CD4-positive, alpha-beta T cell (primary cell): ENCODE measurements at regions of chr20 and their contacts with region 1.

Region 1: GRCh38 chr20:38805502-38805957 is at the start of gene PPP1R16B:
- DNase-seq: peak; percentile 56 to 88 (median 73)
- ATAC-seq: peak; percentile 59
- H3K4me3 ChIP-seq: peak within 1 kb of the TSS; percentile 98
- H3K4me3 Mint-ChIP-seq: peak within 1 kb of the TSS; percentile 89
- H3K27ac ChIP-seq: peak within 1 kb of the TSS; percentile 96 to 100
- H3K27ac Mint-ChIP-seq: peak within 1 kb of the TSS; percentile 97
- H3K4me1 ChIP-seq: peaks cover 57% of the 10 kb centered on the region
- H3K4me1 Mint-ChIP-seq: peaks cover 55% of the 10 kb centered on the region
- H3K27me3 ChIP-seq: no peaks in the 10 kb centered on the region
- H3K27me3 Mint-ChIP-seq: no peaks in the 10 kb centered on the region
- CTCF ChIP-seq: no peak
- total RNA-seq, gene PPP1R16B: 87.6 to 91.1 TPM

Region 2: DNA sequence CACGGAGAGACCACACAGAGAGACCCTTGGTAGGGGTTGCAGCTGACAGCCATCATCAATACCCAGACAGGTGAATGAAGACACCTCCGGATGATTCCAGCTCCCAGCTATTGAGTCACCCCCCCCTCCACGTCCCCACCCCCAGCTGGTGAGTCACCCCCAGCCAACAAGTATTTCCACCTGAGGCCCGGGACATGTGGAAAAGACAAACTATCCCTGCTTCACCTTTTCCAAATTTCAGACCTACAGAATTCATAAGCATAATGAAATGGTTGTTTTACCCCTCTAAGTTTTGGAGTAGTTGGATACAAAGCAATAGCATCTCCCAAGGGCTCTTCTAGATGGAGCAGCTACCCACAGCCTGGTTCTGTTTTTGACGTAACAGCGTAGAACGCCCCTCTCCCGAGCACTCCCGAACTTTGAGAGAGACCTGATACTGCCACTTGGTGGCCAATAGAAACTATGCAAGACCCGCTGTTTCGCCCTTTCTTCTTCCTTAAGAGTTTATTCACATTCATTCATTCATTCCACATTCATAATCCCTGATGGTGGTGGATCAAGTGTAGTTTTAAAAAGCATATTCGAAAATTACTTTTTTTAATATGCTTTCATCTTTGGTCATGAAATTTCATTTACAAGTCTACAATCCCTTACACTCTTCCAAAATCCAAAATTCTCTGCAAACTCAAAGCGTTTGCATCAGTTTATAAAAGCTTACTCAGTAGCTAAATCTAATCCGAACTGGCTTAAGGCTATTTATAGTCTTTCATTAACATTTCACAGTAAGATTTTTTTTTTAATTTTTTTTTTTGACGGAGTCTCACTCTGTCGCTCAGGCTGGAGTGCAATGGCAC is 15.1 kb before region 1 on chr20:
- CTCF ChIA-PET with region 1: no interaction called
- POLR2A ChIA-PET with region 1: interaction called, 15 read pairs
- intact Hi-C with region 1: loop called (anchors 1 kb)
- DNase-seq: peak in 9 of 14 experiments; percentile 17 to 79 (median 51)
- ATAC-seq: peak; percentile 96
- H3K4me3 ChIP-seq: no peak overlapping the region
- H3K4me3 Mint-ChIP-seq: no peak overlapping the region
- H3K27ac ChIP-seq: no peak overlapping the region
- H3K27ac Mint-ChIP-seq: no peak overlapping the region
- H3K4me1 ChIP-seq: peaks cover 10% of the 10 kb centered on the region
- H3K4me1 Mint-ChIP-seq: peaks cover 13% of the 10 kb centered on the region
- H3K27me3 ChIP-seq: no peaks in the 10 kb centered on the region
- H3K27me3 Mint-ChIP-seq: no peaks in the 10 kb centered on the region
- CTCF ChIP-seq: peak; percentile 85

Region 3: GRCh38 chr20:38833857-38834164 is 28.3 kb after region 1 on chr20:
- CTCF ChIA-PET with region 1: no interaction called
- POLR2A ChIA-PET with region 1: interaction called, 10 read pairs
- intact Hi-C with region 1: loop called in 1 of 2 experiments (anchors 2 kb)
- DNase-seq: peak in 8 of 14 experiments; percentile 11 to 79 (median 35)
- ATAC-seq: peak; percentile 68
- H3K4me3 ChIP-seq: no peak overlapping the region
- H3K4me3 Mint-ChIP-seq: peak overlapping the region; percentile 16
- H3K27ac ChIP-seq: no peak overlapping the region
- H3K27ac Mint-ChIP-seq: peak overlapping the region; percentile 55
- H3K4me1 ChIP-seq: peaks cover 56% of the 10 kb centered on the region
- H3K4me1 Mint-ChIP-seq: peaks cover 69% of the 10 kb centered on the region
- H3K27me3 ChIP-seq: no peaks in the 10 kb centered on the region
- H3K27me3 Mint-ChIP-seq: no peaks in the 10 kb centered on the region
- CTCF ChIP-seq: no peak

Region 4: GRCh38 chr20:38875175-38875993 is 69.9 kb after region 1 on chr20:
- CTCF ChIA-PET with region 1: interaction called, 8 read pairs
- POLR2A ChIA-PET with region 1: interaction called, 107 read pairs
- intact Hi-C with region 1: loop called (anchors 1 to 5 kb)
- DNase-seq: peak; percentile 45 to 89 (median 62)
- ATAC-seq: peak; percentile 51
- H3K4me3 ChIP-seq: peak overlapping the region; percentile 40
- H3K4me3 Mint-ChIP-seq: peak overlapping the region; percentile 84
- H3K27ac ChIP-seq: peak overlapping the region; percentile 76 to 89
- H3K27ac Mint-ChIP-seq: peak overlapping the region; percentile 89
- H3K4me1 ChIP-seq: peaks cover 70% of the 10 kb centered on the region
- H3K4me1 Mint-ChIP-seq: peaks cover 98% of the 10 kb centered on the region
- H3K27me3 ChIP-seq: no peaks in the 10 kb centered on the region
- H3K27me3 Mint-ChIP-seq: no peaks in the 10 kb centered on the region
- CTCF ChIP-seq: no peak

Region 5: GRCh38 chr20:38962044-38962927 is 156.8 kb after region 1 on chr20 and contains the start of gene DHX35:
- CTCF ChIA-PET with region 1: no interaction called
- POLR2A ChIA-PET with region 1: interaction called, 19 read pairs
- intact Hi-C with region 1: loop called in 1 of 2 experiments (anchors 5 kb)
- DNase-seq: peak; percentile 96 to 100 (median 98)
- ATAC-seq: peak; percentile 98
- H3K4me3 ChIP-seq: peak within 1 kb of the TSS; percentile 80
- H3K4me3 Mint-ChIP-seq: peak within 1 kb of the TSS; percentile 97
- H3K27ac ChIP-seq: peak within 1 kb of the TSS; percentile 73 to 77
- H3K27ac Mint-ChIP-seq: peak within 1 kb of the TSS; percentile 88
- H3K4me1 ChIP-seq: peaks cover 16% of the 10 kb centered on the region
- H3K4me1 Mint-ChIP-seq: peaks cover 33% of the 10 kb centered on the region
- H3K27me3 ChIP-seq: no peaks in the 10 kb centered on the region
- H3K27me3 Mint-ChIP-seq: no peaks in the 10 kb centered on the region
- CTCF ChIP-seq: peak; percentile 23
- total RNA-seq, gene DHX35: 7.3 to 7.6 TPM